Panc1 (cell line): ENCODE measurements at regions of chr1 and their contacts with region 1.

Region 1: GRCh38 chr1:176017722-176018121 is 189.4 kb downstream of the COP1 start:
- DNase-seq: no peak
- ATAC-seq: no peak
- H3K4me3 ChIP-seq: no peak overlapping the region
- H3K27ac ChIP-seq: no peak overlapping the region
- H3K4me1 ChIP-seq: no peaks in the 10 kb centered on the region
- H3K27me3 ChIP-seq: no peaks in the 10 kb centered on the region
- CTCF ChIP-seq: no peak

Region 2: DNA sequence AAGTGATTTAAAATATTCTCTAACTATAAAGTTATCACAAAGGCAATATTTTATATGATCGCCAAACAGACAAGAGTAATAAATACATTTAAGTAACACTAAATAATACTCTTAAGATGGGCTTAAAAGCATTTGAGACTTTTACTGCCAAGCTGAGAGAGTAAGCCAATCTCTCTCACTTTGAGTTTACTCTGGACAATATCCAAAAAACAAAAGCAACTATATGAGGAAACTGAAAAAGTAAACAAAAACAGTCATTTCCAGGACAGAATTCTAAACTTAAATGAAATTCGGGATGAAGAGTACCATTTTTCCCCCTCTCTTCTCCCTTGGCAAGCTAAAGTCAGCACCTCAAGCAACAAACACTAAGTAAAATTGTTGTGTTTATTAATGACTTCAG is 16.2 kb after region 1 on chr1:
- CTCF ChIA-PET with region 1: no interaction called
- POLR2A ChIA-PET with region 1: interaction called, 11 read pairs
- in situ Hi-C with region 1: no loop called
- intact Hi-C with region 1: no loop called
- DNase-seq: no peak
- ATAC-seq: no peak
- H3K4me3 ChIP-seq: no peak overlapping the region
- H3K27ac ChIP-seq: no peak overlapping the region
- H3K4me1 ChIP-seq: peaks cover 12% of the 10 kb centered on the region
- H3K27me3 ChIP-seq: no peaks in the 10 kb centered on the region
- CTCF ChIP-seq: no peak